Activated CD8-positive, alpha-beta T cell treated with anti-CD3 and anti-CD28 coated beads for 36 hours (primary cell): ENCODE measurements at regions of chr14 and their contacts with region 1.

Region 1: DNA sequence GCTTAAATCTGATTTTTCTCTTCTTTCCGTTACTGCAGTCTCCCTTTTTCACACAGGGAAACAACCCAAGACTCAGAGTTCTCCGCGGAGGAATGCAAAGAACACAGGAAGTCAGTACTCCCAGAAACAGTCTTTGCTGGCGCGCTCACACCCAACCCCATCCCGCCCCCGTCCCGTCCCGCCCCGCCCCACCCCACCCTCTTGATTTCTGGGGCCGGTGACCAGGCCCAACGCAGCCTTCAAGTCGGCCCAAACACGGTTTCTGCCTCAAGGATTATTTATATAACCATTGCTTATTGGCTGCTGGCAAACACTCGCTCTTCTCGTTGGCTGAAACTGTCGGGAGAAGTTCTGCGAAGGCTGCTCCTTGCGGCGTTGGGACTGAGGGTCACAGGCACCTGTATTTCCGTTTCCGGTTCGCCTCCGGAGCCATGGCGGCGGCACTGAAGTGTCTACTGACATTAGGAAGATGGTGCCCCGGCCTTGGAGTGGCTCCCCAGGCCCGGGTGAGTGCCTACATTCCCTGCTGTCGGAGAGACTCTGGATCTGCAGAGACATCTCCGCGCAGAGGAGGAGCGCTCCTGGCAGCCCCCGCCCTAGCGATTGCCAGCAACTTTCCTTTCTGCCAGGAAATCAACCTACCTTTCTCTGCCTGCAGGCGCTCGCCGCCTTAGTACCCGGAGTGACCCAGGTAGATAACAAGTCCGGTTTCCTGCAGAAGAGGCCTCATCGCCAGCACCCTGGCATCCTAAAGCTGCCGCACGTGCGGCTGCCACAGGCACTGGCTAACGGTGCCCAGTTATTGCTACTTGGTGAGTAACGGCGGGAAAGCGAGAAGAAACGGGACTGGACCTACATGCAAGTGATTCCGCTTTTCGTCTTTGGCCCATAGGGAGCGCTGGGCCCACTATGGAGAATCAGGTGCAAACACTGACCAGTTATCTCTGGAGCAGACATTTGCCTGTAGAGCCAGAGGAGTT is at the start of gene METTL17:
- DNase-seq: peak; percentile 94
- ATAC-seq: peak; percentile 97
- H3K4me3 Mint-ChIP-seq: peak within 1 kb of the TSS; percentile 84
- H3K27ac Mint-ChIP-seq: peak within 1 kb of the TSS; percentile 88
- H3K4me1 Mint-ChIP-seq: peaks cover 26% of the 10 kb centered on the region
- H3K27me3 Mint-ChIP-seq: no peaks in the 10 kb centered on the region
- CTCF ChIP-seq: peak; percentile 51
- total RNA-seq, gene METTL17: 88.4 to 92.0 TPM

Region 2: GRCh38 chr14:21003788-21004346 is 14.0 kb after region 1 on chr14:
- CTCF ChIA-PET with region 1: interaction called, 11 read pairs
- POLR2A ChIA-PET with region 1: interaction called, 4 read pairs
- intact Hi-C with region 1: no loop called
- DNase-seq: no peak
- ATAC-seq: no peak
- H3K4me3 Mint-ChIP-seq: no peak overlapping the region
- H3K27ac Mint-ChIP-seq: no peak overlapping the region
- H3K4me1 Mint-ChIP-seq: no peaks in the 10 kb centered on the region
- H3K27me3 Mint-ChIP-seq: no peaks in the 10 kb centered on the region
- CTCF ChIP-seq: no peak